ENCODE measurements at regions of chr4 and their contacts with region 1.

Region 1: GRCh38 chr4:26061248-26061986 is 147.4 kb downstream of the SMIM20 start:
- DNase-seq: no peak
- H3K4me3 ChIP-seq: no peak overlapping the region
- H3K27ac ChIP-seq: no peak overlapping the region
- H3K4me1 ChIP-seq: no peaks in the 10 kb centered on the region
- H3K27me3 ChIP-seq: no peaks in the 10 kb centered on the region
- CTCF ChIP-seq: peak; percentile 33 to 48 (median 44)
- EP300 ChIP-seq: no peak
- POLR2A ChIP-seq: no peak

Region 2: GRCh38 chr4:25172961-25173915 is 888.2 kb before region 1 on chr4:
- in situ Hi-C with region 1: no loop called
- intact Hi-C with region 1: loop called (anchors 5 kb)
- DNase-seq: no peak
- H3K4me3 ChIP-seq: no peak overlapping the region
- H3K27ac ChIP-seq: peak overlapping the region; percentile 45 to 69 (median 60)
- H3K4me1 ChIP-seq: peaks cover 0 to 13% (median 8%) of the 10 kb centered on the region in 4 donors
- H3K27me3 ChIP-seq: no peaks in the 10 kb centered on the region
- CTCF ChIP-seq: no peak
- EP300 ChIP-seq: no peak
- POLR2A ChIP-seq: no peak